ENCODE measurements at regions of chr12 and their contacts with region 1.

Region 1: GRCh38 chr12:54040148-54040494 is 7.3 kb downstream of the HOXC5 start:
- DNase-seq: no peak
- ATAC-seq: no peak
- H3K4me3 Mint-ChIP-seq: no peak overlapping the region
- H3K27ac Mint-ChIP-seq: no peak overlapping the region
- H3K4me1 Mint-ChIP-seq: peaks cover 8% of the 10 kb centered on the region
- H3K27me3 Mint-ChIP-seq: peaks cover 71% of the 10 kb centered on the region
- CTCF ChIP-seq: no peak

Region 2: DNA sequence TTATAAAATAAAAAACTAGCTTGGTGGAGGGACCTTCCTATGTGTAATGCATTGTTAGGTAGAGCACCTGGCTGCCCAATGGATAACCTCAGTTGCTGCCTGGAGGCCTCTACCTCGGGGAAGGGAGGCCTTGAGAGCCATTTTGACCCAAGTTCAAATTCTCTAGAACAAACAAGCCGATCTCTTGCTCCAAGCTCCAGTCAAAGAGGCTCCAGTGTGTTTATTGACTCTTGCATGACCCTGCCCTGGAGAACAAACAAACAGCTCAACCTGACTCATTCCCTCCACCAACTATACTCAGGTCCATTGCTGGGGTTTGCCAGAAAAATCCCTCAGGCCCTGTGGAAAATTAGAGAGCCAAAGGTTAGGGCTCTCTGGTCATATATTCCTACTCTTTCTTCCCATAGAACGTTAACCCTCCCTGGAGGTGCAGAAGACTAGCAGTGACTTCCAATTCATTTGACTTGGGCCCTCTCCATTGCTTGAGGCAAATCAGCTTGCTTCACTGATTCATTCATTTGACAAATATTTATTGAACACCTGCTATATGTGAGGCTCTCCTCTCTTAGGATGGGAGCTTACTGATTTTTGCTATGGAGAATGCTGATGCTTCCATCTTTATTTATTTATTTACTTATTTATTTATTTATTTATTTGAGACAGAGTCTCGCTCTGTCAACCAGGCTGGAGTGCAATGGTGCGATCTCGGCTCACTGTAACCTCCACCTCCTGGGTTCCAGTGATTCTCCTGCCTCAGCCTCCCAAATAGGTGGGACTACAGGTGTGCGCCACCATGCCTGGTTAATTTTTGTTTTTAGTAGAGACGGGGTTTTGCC is 214.7 kb before region 1 on chr12:
- CTCF ChIA-PET with region 1: no interaction called
- POLR2A ChIA-PET with region 1: no interaction called
- intact Hi-C with region 1: no loop called
- DNase-seq: no peak
- ATAC-seq: no peak
- H3K4me3 Mint-ChIP-seq: no peak overlapping the region
- H3K27ac Mint-ChIP-seq: no peak overlapping the region
- H3K4me1 Mint-ChIP-seq: no peaks in the 10 kb centered on the region
- H3K27me3 Mint-ChIP-seq: peaks cover 27% of the 10 kb centered on the region
- CTCF ChIP-seq: no peak

Region 3: GRCh38 chr12:54053751-54054741 is 13.9 kb after region 1 on chr12 and contains the start of gene HOXC4:
- CTCF ChIA-PET with region 1: interaction called, 11 read pairs
- POLR2A ChIA-PET with region 1: no interaction called
- intact Hi-C with region 1: no loop called
- DNase-seq: peak; percentile 48
- ATAC-seq: peak; percentile 72
- H3K4me3 Mint-ChIP-seq: peak within 1 kb of the TSS; percentile 73
- H3K27ac Mint-ChIP-seq: peak within 1 kb of the TSS; percentile 82
- H3K4me1 Mint-ChIP-seq: peaks cover 30% of the 10 kb centered on the region
- H3K27me3 Mint-ChIP-seq: peaks cover 62% of the 10 kb centered on the region
- CTCF ChIP-seq: no peak
- total RNA-seq, gene HOXC4: 0.89 to 1.2 TPM